Sigmoid colon (tissue), 7 donors: ENCODE measurements at regions of chr11 and their contacts with region 1.

Region 1: DNA sequence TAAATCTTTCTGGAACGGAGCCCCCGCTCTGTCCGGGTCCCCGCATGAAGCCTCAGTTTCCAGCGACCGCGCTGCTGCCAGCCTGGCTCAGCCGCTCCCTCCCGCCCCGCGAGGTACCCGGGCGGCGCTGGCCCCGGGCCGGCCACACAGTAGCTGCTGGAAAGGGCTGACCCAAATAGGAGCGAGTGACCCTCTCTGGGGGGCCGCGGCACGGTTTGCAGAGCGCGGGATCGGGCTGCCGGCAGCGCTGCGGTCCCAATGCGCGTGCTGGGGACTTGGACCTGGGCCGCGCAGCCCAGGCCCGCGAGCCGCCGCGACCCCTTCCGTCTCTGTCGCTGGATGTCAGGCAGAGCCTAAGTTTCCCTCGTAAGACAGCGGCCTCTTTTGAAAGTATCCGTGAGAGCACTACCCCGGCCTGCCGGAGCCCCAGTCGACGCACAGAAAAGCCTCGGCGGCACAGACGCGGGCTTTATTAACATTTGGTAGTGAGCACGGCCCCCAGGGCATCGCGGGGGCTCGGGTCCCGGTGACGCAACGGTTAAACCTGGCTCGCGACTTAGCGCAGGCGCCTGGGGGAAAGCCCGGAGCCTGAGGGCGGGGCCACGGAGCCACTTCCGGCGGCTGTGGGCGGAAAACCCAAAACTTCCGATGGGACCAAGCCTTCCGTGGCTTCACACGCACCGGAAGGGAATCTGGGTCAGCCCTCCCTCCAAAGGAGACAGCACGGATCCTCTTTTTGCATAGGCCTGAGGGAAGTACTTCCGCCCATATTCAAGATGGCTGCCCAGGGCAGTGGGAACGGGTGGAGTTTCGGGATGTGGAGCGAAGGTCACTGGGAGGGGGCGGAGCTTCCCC is 14.9 kb downstream of the BAD start:
- DNase-seq: peak; percentile 99
- H3K4me3 ChIP-seq: peak overlapping the region; percentile 53 to 94 (median 78)
- H3K27ac ChIP-seq: peak overlapping the region; percentile 87 to 99 (median 96)
- H3K4me1 ChIP-seq: peaks cover 0 to 37% (median 31%) of the 10 kb centered on the region in 4 donors
- H3K27me3 ChIP-seq: no peaks in the 10 kb centered on the region
- CTCF ChIP-seq: no peak
- EP300 ChIP-seq: peak in 1 of 4 donors; percentile 62
- POLR2A ChIP-seq: peak in 1 of 2 donors; percentile 22

Region 2: GRCh38 chr11:63719977-63720376 is 549.6 kb before region 1 on chr11:
- intact Hi-C with region 1: no loop called
- DNase-seq: no peak
- H3K4me3 ChIP-seq: no peak overlapping the region
- H3K27ac ChIP-seq: no peak overlapping the region
- H3K4me1 ChIP-seq: peaks cover 0 to 5% (median 0%) of the 10 kb centered on the region in 4 donors
- H3K27me3 ChIP-seq: no peaks in the 10 kb centered on the region
- CTCF ChIP-seq: no peak
- EP300 ChIP-seq: no peak
- POLR2A ChIP-seq: no peak

Region 3: DNA sequence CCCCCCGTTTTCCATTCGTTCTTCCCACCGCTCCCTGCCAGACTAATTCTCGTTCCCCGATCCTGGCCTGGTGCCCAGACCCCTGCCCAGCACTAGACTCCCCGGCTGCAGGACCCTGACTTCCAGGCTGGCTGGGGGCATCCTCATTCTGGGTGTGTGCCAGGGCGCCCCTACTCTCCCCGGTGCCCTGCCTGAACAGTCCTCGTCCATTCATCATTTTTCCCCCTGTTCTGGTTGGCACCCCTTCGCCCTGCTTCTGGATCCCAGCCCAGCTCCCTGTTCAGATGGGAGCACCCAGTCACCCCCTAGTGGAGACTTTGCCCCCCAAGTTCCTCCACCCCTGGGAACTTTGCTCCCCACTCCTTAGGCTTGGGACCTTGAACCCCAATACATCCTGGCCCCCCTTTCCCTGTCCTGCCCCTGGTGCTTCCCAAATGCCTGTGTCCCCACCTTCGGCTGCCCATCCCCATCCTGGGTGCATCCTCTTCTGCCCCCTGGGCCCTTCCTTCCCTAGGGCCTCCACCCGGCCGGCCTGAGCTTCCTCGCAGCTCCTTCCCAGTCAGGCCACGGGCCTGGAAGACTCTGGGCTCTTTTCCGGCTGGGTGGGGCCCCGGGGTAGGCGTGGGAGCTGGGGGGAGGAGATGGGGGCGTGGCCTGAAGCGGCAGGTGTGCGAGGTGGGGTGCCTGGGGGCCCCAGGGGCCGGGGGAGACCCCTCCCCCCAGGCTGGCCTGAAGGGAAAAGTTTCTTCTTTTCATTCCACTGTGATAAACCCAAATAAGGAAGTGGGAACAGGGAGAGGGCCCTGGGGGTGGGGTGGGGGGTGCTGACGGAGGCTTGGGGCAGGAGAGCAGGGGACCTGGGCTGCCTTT is 17.4 kb before region 1 on chr11:
- intact Hi-C with region 1: loop called (anchors 1 kb)
- DNase-seq: peak; percentile 77
- H3K4me3 ChIP-seq: peak overlapping the region; percentile 68 to 93 (median 79)
- H3K27ac ChIP-seq: peak overlapping the region; percentile 73 to 85 (median 79)
- H3K4me1 ChIP-seq: peaks cover 0 to 43% (median 32%) of the 10 kb centered on the region in 4 donors
- H3K27me3 ChIP-seq: no peaks in the 10 kb centered on the region
- CTCF ChIP-seq: peak; percentile 13 to 41 (median 34)
- EP300 ChIP-seq: no peak
- POLR2A ChIP-seq: peak in 1 of 2 donors; percentile 49

Region 4: GRCh38 chr11:64284048-64284961 is 14.7 kb after region 1 on chr11 and contains the start of gene BAD:
- intact Hi-C with region 1: loop called (anchors 1 kb)
- DNase-seq: peak; percentile 98
- H3K4me3 ChIP-seq: peak within 1 kb of the TSS; percentile 69 to 81 (median 76)
- H3K27ac ChIP-seq: peak within 1 kb of the TSS; percentile 96 to 99 (median 98)
- H3K4me1 ChIP-seq: peaks cover 0 to 31% (median 28%) of the 10 kb centered on the region in 4 donors
- H3K27me3 ChIP-seq: peaks cover 0 to 1% (median 0%) of the 10 kb centered on the region in 3 donors
- CTCF ChIP-seq: no peak
- EP300 ChIP-seq: no peak
- POLR2A ChIP-seq: peak; percentile 39 to 78
- total RNA-seq, gene BAD: 95.3 to 143 (median 121) TPM